ENCODE measurements at regions of chr4 and their contacts with region 1.

Region 1: GRCh38 chr4:4614925-4615678 is 73.3 kb upstream of the STX18 start:
- DNase-seq: no peak
- H3K4me3 ChIP-seq: no peak overlapping the region
- H3K27ac ChIP-seq: no peak overlapping the region
- H3K4me1 ChIP-seq: no peaks in the 10 kb centered on the region
- H3K27me3 ChIP-seq: no peaks in the 10 kb centered on the region
- CTCF ChIP-seq: no peak

Region 2: DNA sequence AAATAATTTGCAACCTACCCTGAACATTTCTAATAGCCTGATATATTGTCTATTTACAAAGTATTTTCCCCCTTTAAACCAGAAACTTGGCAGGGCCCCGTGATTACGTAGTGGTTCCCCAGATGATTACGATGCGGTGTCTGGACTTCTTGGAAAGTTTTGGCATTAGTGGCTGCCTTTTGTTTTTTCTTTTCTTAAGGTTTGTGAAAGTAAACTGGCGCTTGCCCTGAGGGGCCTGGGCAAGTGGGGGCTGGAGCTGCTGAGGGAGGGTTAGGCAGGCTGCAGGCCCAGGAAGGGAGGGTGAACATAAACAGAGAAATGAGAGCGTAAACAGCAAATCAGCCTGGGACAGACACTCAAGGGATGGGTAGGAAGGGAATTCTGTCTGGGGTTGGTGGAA is 120.8 kb after region 1 on chr4:
- CTCF ChIA-PET with region 1: no interaction called
- POLR2A ChIA-PET with region 1: no interaction called
- intact Hi-C with region 1: no loop called
- DNase-seq: no peak
- H3K4me3 ChIP-seq: no peak overlapping the region
- H3K27ac ChIP-seq: no peak overlapping the region
- H3K4me1 ChIP-seq: no peaks in the 10 kb centered on the region
- H3K27me3 ChIP-seq: no peaks in the 10 kb centered on the region
- CTCF ChIP-seq: no peak

Region 3: DNA sequence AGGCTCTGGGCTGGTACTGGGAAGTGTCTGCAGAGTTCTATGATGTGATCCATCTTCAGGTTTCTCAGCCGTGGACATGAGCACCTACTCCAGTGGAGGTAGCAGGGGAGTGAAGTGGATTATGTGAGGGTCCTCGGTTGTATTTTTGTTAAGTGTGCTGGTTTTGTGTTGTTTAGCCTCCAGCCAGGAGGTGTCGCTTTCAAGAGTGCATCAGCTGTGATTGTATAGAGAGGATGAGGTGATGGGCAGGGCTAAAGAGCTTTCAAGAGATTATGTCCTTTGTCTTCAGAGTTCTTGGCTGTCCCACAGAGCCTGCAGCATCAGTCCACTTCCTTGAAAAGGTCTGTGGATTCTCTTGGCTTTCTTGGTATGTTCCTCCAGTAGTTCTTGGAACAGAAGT is 692.8 kb after region 1 on chr4:
- CTCF ChIA-PET with region 1: no interaction called
- POLR2A ChIA-PET with region 1: no interaction called
- intact Hi-C with region 1: loop called (anchors 10 kb)
- DNase-seq: no peak
- H3K4me3 ChIP-seq: no peak overlapping the region
- H3K27ac ChIP-seq: no peak overlapping the region
- H3K4me1 ChIP-seq: no peaks in the 10 kb centered on the region
- H3K27me3 ChIP-seq: no peaks in the 10 kb centered on the region
- CTCF ChIP-seq: no peak